ENCODE measurements at regions of chr3 and their contacts with region 1.

Region 1: DNA sequence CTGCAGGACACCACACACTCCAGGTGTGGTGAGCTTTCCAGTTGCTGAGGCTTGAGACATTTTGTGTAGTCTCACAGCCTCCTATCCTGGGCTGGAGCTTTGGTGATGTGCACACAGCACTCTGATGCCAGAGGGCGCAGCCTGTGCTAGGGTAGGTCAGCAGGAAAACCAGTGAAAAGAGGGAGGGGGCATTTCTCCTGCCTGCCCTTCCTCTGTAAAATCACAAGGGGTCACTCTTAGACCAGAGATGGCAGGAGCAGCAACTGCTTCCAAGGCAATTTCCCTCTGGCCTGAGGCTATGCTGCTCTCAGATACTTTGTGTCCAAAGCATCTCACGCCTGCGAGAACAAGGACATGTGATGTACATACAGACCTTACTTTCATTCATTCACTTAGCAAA is 16.5 kb upstream of the MUSTN1 start:
- DNase-seq: peak; percentile 12
- H3K4me3 ChIP-seq: no peak overlapping the region
- H3K27ac ChIP-seq: no peak overlapping the region
- H3K4me1 ChIP-seq: no peaks in the 10 kb centered on the region
- H3K27me3 ChIP-seq: no peaks in the 10 kb centered on the region
- CTCF ChIP-seq: peak; percentile 35 to 64

Region 2: GRCh38 chr3:52934630-52935530 is 83.5 kb after region 1 on chr3:
- CTCF ChIA-PET with region 1: no interaction called
- dilution Hi-C with region 1: no loop called
- in situ Hi-C with region 1: no loop called
- intact Hi-C with region 1: loop called (anchors 1 kb)
- DNase-seq: peak; percentile 24
- H3K4me3 ChIP-seq: no peak overlapping the region
- H3K27ac ChIP-seq: no peak overlapping the region
- H3K4me1 ChIP-seq: no peaks in the 10 kb centered on the region
- H3K27me3 ChIP-seq: no peaks in the 10 kb centered on the region
- CTCF ChIP-seq: peak; percentile 83 to 87

Region 3: GRCh38 chr3:52986938-52987337 is 135.6 kb after region 1 on chr3:
- CTCF ChIA-PET with region 1: no interaction called
- dilution Hi-C with region 1: no loop called
- in situ Hi-C with region 1: no loop called
- intact Hi-C with region 1: loop called (anchors 5 kb)
- DNase-seq: no peak
- H3K4me3 ChIP-seq: no peak overlapping the region
- H3K27ac ChIP-seq: no peak overlapping the region
- H3K4me1 ChIP-seq: no peaks in the 10 kb centered on the region
- H3K27me3 ChIP-seq: no peaks in the 10 kb centered on the region
- CTCF ChIP-seq: peak in 1 of 2 donors; percentile 43

Region 4: GRCh38 chr3:53045518-53046170 is 194.3 kb after region 1 on chr3 and contains the start of gene SFMBT1:
- CTCF ChIA-PET with region 1: no interaction called
- dilution Hi-C with region 1: no loop called
- in situ Hi-C with region 1: no loop called
- intact Hi-C with region 1: loop called (anchors 1 kb)
- DNase-seq: peak; percentile 62
- H3K4me3 ChIP-seq: peak within 1 kb of the TSS; percentile 78 to 89 (median 81)
- H3K27ac ChIP-seq: peak within 1 kb of the TSS; percentile 63
- H3K4me1 ChIP-seq: peaks cover 21% of the 10 kb centered on the region
- H3K27me3 ChIP-seq: no peaks in the 10 kb centered on the region
- CTCF ChIP-seq: no peak
- total RNA-seq, gene SFMBT1: 8.7 to 21.5 TPM

Region 5: GRCh38 chr3:53412953-53413352 is 561.6 kb after region 1 on chr3:
- CTCF ChIA-PET with region 1: no interaction called
- dilution Hi-C with region 1: no loop called
- in situ Hi-C with region 1: no loop called
- intact Hi-C with region 1: no loop called
- DNase-seq: no peak
- H3K4me3 ChIP-seq: no peak overlapping the region
- H3K27ac ChIP-seq: no peak overlapping the region
- H3K4me1 ChIP-seq: no peaks in the 10 kb centered on the region
- H3K27me3 ChIP-seq: no peaks in the 10 kb centered on the region
- CTCF ChIP-seq: no peak